Activated CD8-positive, alpha-beta T cell treated with anti-CD3 and anti-CD28 coated beads for 36 hours (primary cell): ENCODE measurements at regions of chr7 and their contacts with region 1.

Region 1: DNA sequence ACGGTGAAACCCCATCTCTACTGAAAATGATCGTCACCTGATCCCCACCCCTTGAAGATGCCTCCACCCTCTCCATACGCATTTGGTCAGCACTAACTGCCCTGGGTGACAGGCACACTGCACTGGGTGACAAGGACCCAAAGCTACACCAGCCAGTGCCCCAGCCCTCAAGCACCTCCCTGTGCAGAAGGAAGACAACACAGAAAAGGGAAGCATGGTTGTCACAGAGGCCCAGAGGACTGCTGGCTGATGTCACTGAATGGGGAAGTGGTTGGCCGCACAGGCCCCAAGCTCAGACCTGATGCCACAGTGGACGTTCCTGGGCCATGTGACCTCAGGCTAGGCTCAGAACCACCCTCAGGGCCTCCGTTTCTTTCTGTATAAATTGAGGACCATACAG is 4.2 kb upstream of the PILRA start:
- DNase-seq: no peak
- ATAC-seq: no peak
- H3K4me3 Mint-ChIP-seq: no peak overlapping the region
- H3K27ac Mint-ChIP-seq: peak overlapping the region; percentile 61
- H3K4me1 Mint-ChIP-seq: peaks cover 54% of the 10 kb centered on the region
- H3K27me3 Mint-ChIP-seq: no peaks in the 10 kb centered on the region
- CTCF ChIP-seq: no peak

Region 2: DNA sequence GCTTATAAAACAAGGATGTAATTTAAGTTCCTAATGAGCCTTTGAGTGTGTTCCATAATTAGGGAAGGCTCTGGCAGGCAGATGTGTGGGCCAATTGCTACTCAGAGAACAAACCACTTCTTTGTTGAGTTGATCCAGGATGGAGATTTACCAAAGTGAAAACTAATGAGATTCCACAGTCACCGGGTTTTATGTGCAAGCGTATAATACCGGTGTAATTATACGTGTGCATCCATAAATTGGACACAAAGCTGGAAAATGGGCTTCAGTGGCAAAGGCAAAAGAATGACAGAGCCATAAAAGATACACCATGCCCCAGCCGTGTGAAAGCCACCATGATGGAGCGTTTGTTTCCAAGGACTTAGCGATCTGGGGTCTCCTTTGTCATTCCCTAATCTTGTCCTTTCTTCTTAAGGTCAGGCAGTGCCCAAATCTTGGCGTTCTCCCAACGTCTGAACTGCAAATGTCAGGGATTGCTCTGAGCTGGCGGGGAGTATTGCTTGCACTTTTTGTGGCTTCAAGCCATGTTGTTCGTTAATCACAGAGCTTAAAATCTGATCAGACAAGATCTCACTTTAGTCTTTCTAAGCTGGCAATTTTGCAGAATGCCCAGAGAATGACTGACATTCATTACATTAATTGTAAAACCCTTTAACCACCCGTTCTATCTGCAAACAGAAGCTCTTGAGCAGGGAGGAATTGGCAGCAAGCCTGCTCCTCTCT is 1681.9 kb before region 1 on chr7:
- CTCF ChIA-PET with region 1: no interaction called
- POLR2A ChIA-PET with region 1: no interaction called
- intact Hi-C with region 1: no loop called
- DNase-seq: no peak
- ATAC-seq: no peak
- H3K4me3 Mint-ChIP-seq: no peak overlapping the region
- H3K27ac Mint-ChIP-seq: no peak overlapping the region
- H3K4me1 Mint-ChIP-seq: no peaks in the 10 kb centered on the region
- H3K27me3 Mint-ChIP-seq: peaks cover 3% of the 10 kb centered on the region
- CTCF ChIP-seq: no peak

Region 3: GRCh38 chr7:99679032-99679399 is 690.1 kb before region 1 on chr7:
- CTCF ChIA-PET with region 1: no interaction called
- POLR2A ChIA-PET with region 1: no interaction called
- intact Hi-C with region 1: no loop called
- DNase-seq: no peak
- ATAC-seq: no peak
- H3K4me3 Mint-ChIP-seq: no peak overlapping the region
- H3K27ac Mint-ChIP-seq: no peak overlapping the region
- H3K4me1 Mint-ChIP-seq: peaks cover 19% of the 10 kb centered on the region
- H3K27me3 Mint-ChIP-seq: no peaks in the 10 kb centered on the region
- CTCF ChIP-seq: no peak

Region 4: DNA sequence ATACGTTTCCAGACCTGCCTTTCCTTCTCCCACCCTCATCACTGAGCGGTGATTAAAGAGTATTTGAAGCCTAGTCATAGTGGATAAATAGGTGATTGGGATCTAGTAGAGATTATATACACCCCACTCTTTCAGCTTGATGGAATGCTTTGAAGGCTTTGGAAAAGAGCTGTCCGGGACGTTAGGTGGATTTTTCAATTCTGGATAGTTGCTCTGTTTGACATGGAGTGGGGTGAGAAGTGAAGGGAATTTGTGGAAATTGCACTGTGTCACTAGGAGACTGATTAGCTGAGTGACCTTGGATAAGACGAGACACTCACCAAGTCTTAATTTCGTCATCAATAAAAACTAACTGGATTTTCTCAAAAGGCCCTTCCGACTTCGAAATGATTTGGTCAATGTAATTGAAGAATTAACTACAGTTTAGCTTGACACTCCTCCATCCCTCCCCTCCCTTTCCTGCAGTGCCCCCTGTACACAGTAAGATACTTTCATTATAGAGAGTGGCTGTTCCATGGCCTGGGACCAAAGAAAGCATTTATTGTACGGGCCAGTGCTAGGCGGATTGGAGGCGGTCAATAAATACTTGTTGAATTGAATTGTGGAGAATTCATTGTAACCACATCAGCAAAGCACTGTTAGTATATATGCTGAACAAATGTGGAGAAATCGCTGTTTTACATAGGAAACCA is 352.7 kb before region 1 on chr7:
- CTCF ChIA-PET with region 1: no interaction called
- POLR2A ChIA-PET with region 1: no interaction called
- intact Hi-C with region 1: no loop called
- DNase-seq: no peak
- ATAC-seq: no peak
- H3K4me3 Mint-ChIP-seq: peak overlapping the region; percentile 95
- H3K27ac Mint-ChIP-seq: peak overlapping the region; percentile 92
- H3K4me1 Mint-ChIP-seq: peaks cover 54% of the 10 kb centered on the region
- H3K27me3 Mint-ChIP-seq: no peaks in the 10 kb centered on the region
- CTCF ChIP-seq: no peak

Region 5: GRCh38 chr7:100353685-100354330 is 15.3 kb before region 1 on chr7:
- CTCF ChIA-PET with region 1: no interaction called
- POLR2A ChIA-PET with region 1: interaction called, 26 read pairs
- intact Hi-C with region 1: no loop called
- DNase-seq: peak; percentile 81
- ATAC-seq: peak; percentile 73
- H3K4me3 Mint-ChIP-seq: peak overlapping the region; percentile 36
- H3K27ac Mint-ChIP-seq: peak overlapping the region; percentile 89
- H3K4me1 Mint-ChIP-seq: peaks cover 37% of the 10 kb centered on the region
- H3K27me3 Mint-ChIP-seq: no peaks in the 10 kb centered on the region
- CTCF ChIP-seq: no peak

Region 6: GRCh38 chr7:100396421-100396982 is 27.4 kb after region 1 on chr7:
- CTCF ChIA-PET with region 1: no interaction called
- POLR2A ChIA-PET with region 1: interaction called, 3 read pairs
- intact Hi-C with region 1: loop called (anchors 5 kb)
- DNase-seq: peak; percentile 87
- ATAC-seq: peak; percentile 93
- H3K4me3 Mint-ChIP-seq: no peak overlapping the region
- H3K27ac Mint-ChIP-seq: peak overlapping the region; percentile 50
- H3K4me1 Mint-ChIP-seq: peaks cover 18% of the 10 kb centered on the region
- H3K27me3 Mint-ChIP-seq: peaks cover 7% of the 10 kb centered on the region
- CTCF ChIP-seq: no peak